Mammary epithelial cell (primary cell): ENCODE measurements at regions of chr14 and their contacts with region 1.

Region 1: GRCh38 chr14:73491256-73492042 is 716 bp downstream of the RIOX1 start:
- DNase-seq: peak; percentile 74
- H3K4me3 ChIP-seq: peak overlapping the region; percentile 72 to 80 (median 78)
- H3K27ac ChIP-seq: peak overlapping the region; percentile 70
- H3K4me1 ChIP-seq: peaks cover 30% of the 10 kb centered on the region
- H3K27me3 ChIP-seq: no peaks in the 10 kb centered on the region
- CTCF ChIP-seq: no peak

Region 2: DNA sequence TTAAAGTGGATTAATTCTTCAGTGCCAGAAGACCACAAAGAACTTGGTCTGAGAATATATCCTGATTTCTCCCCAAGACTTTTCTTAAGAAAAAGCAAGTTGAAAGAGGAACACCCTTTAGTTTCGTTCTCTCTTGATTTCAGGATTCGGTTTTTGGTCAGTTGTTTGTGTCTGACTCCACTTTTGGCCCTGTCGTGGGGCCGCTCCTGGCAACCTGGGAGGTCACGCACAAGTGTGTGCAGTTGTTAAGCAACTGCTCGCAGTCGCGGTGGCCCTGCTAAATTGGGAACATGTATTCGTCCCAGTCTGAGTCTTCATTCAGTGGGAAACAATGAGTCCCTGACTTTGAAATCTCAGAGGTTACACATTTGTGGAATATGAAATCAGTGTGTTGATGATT is 1490.5 kb before region 1 on chr14:
- CTCF ChIA-PET with region 1: interaction called, 21 read pairs
- dilution Hi-C with region 1: no loop called
- in situ Hi-C with region 1: no loop called
- intact Hi-C with region 1: no loop called
- DNase-seq: no peak
- H3K4me3 ChIP-seq: no peak overlapping the region
- H3K27ac ChIP-seq: no peak overlapping the region
- H3K4me1 ChIP-seq: no peaks in the 10 kb centered on the region
- H3K27me3 ChIP-seq: no peaks in the 10 kb centered on the region
- CTCF ChIP-seq: no peak

Region 3: DNA sequence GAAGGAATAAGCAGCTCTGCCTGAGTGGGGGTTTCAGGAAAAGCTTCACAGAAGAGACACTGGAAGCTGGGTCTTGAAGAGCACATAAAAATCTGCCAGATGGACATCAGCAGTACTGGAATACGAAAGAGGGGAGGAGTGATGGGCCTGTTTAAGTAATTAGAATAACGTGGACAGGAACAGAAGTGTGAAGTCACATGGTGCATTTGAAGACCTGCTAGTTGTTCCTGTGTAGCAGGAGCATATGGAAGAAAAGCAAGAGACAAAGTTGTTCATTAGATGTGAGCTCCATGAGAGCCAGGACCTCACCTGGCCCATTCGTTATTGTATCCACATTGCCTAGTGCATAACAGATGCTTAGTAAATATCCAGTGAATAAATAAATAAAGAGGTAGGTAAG is 678.5 kb after region 1 on chr14:
- CTCF ChIA-PET with region 1: no interaction called
- dilution Hi-C with region 1: no loop called
- in situ Hi-C with region 1: no loop called
- intact Hi-C with region 1: no loop called
- DNase-seq: no peak
- H3K4me3 ChIP-seq: no peak overlapping the region
- H3K27ac ChIP-seq: no peak overlapping the region
- H3K4me1 ChIP-seq: no peaks in the 10 kb centered on the region
- H3K27me3 ChIP-seq: no peaks in the 10 kb centered on the region
- CTCF ChIP-seq: no peak